ENCODE measurements at regions of chr2 and their contacts with region 1.

Region 1: DNA sequence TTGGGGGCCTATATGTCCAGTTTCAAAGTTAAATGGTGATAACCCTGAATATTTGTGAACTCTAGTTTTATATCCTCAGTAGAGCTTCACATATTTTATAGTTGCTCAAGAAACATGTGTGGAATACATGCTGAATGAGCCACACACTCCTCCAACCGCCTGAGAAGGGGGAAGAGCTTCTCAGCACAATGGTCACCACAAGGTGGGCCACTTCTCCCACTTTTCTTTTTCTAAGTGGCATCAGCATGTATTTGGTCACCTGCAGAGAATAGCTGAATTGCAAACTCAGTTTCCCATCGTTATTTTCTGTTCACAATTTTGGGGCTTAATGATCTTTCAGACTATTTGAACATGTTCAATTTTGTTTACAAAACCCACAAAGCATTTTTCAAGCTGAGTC is 340.5 kb downstream of the PARD3B start:
- DNase-seq: no peak
- H3K4me3 ChIP-seq: no peak overlapping the region
- H3K4me3 Mint-ChIP-seq: no peak overlapping the region
- H3K27ac Mint-ChIP-seq: no peak overlapping the region
- H3K4me1 ChIP-seq: peaks cover 18% of the 10 kb centered on the region
- H3K4me1 Mint-ChIP-seq: peaks cover 32% of the 10 kb centered on the region
- H3K27me3 ChIP-seq: no peaks in the 10 kb centered on the region
- H3K27me3 Mint-ChIP-seq: no peaks in the 10 kb centered on the region
- CTCF ChIP-seq: peak; percentile 14 to 28

Region 2: GRCh38 chr2:203814661-203815540 is 1070.8 kb before region 1 on chr2:
- CTCF ChIA-PET with region 1: no interaction called
- POLR2A ChIA-PET with region 1: no interaction called
- intact Hi-C with region 1: no loop called
- DNase-seq: peak; percentile 72 to 77
- H3K4me3 ChIP-seq: no peak overlapping the region
- H3K4me3 Mint-ChIP-seq: peak overlapping the region; percentile 59
- H3K27ac Mint-ChIP-seq: peak overlapping the region; percentile 75
- H3K4me1 ChIP-seq: peaks cover 39% of the 10 kb centered on the region
- H3K4me1 Mint-ChIP-seq: peaks cover 27% of the 10 kb centered on the region
- H3K27me3 ChIP-seq: no peaks in the 10 kb centered on the region
- H3K27me3 Mint-ChIP-seq: no peaks in the 10 kb centered on the region
- CTCF ChIP-seq: peak; percentile 72 to 83

Region 3: GRCh38 chr2:204108330-204108751 is 777.4 kb before region 1 on chr2:
- CTCF ChIA-PET with region 1: no interaction called
- POLR2A ChIA-PET with region 1: no interaction called
- intact Hi-C with region 1: loop called (anchors 10 kb)
- DNase-seq: peak; percentile 48 to 54
- H3K4me3 ChIP-seq: no peak overlapping the region
- H3K4me3 Mint-ChIP-seq: no peak overlapping the region
- H3K27ac Mint-ChIP-seq: no peak overlapping the region
- H3K4me1 ChIP-seq: no peaks in the 10 kb centered on the region
- H3K4me1 Mint-ChIP-seq: peaks cover 19% of the 10 kb centered on the region
- H3K27me3 ChIP-seq: no peaks in the 10 kb centered on the region; the same call in 1 of the 2 replicates
- H3K27me3 Mint-ChIP-seq: peaks cover 4% of the 10 kb centered on the region
- CTCF ChIP-seq: peak; percentile 78 to 80

Region 4: GRCh38 chr2:204900910-204901309 is 15.2 kb after region 1 on chr2:
- CTCF ChIA-PET with region 1: no interaction called
- POLR2A ChIA-PET with region 1: no interaction called
- intact Hi-C with region 1: loop called (anchors 1 kb)
- DNase-seq: peak; percentile 80 to 86
- H3K4me3 ChIP-seq: no peak overlapping the region
- H3K4me3 Mint-ChIP-seq: peak overlapping the region; percentile 48
- H3K27ac Mint-ChIP-seq: peak overlapping the region; percentile 77
- H3K4me1 ChIP-seq: peaks cover 26% of the 10 kb centered on the region
- H3K4me1 Mint-ChIP-seq: peaks cover 44% of the 10 kb centered on the region
- H3K27me3 ChIP-seq: no peaks in the 10 kb centered on the region
- H3K27me3 Mint-ChIP-seq: no peaks in the 10 kb centered on the region
- CTCF ChIP-seq: no peak

Region 5: GRCh38 chr2:204948024-204948763 is 62.4 kb after region 1 on chr2:
- CTCF ChIA-PET with region 1: no interaction called
- POLR2A ChIA-PET with region 1: no interaction called
- intact Hi-C with region 1: loop called (anchors 5 kb)
- DNase-seq: no peak
- H3K4me3 ChIP-seq: no peak overlapping the region
- H3K4me3 Mint-ChIP-seq: peak overlapping the region; percentile 8
- H3K27ac Mint-ChIP-seq: peak overlapping the region; percentile 61
- H3K4me1 ChIP-seq: peaks cover 41% of the 10 kb centered on the region
- H3K4me1 Mint-ChIP-seq: peaks cover 42% of the 10 kb centered on the region
- H3K27me3 ChIP-seq: no peaks in the 10 kb centered on the region
- H3K27me3 Mint-ChIP-seq: no peaks in the 10 kb centered on the region
- CTCF ChIP-seq: no peak

Region 6: GRCh38 chr2:205511221-205511620 is 625.5 kb after region 1 on chr2:
- CTCF ChIA-PET with region 1: no interaction called
- POLR2A ChIA-PET with region 1: no interaction called
- intact Hi-C with region 1: loop called (anchors 5 kb)
- DNase-seq: no peak
- H3K4me3 ChIP-seq: no peak overlapping the region
- H3K4me3 Mint-ChIP-seq: peak overlapping the region; percentile 14
- H3K27ac Mint-ChIP-seq: peak overlapping the region; percentile 24
- H3K4me1 ChIP-seq: peaks cover 42% of the 10 kb centered on the region
- H3K4me1 Mint-ChIP-seq: peaks cover 54% of the 10 kb centered on the region
- H3K27me3 ChIP-seq: no peaks in the 10 kb centered on the region
- H3K27me3 Mint-ChIP-seq: no peaks in the 10 kb centered on the region
- CTCF ChIP-seq: no peak

Measured in Caco-2 (cell line).